Activated naive CD4-positive, alpha-beta T cell treated with anti-CD3 and anti-CD28 coated beads, Interleukin-2, amount 10 ng/mL, durations not matched to agents 7 days and 5 days (primary cell): ENCODE measurements at regions of chr10 and their contacts with region 1.

Region 1: GRCh38 chr10:22677333-22677732 is 37.0 kb downstream of the PIP4K2A start:
- DNase-seq: no peak
- H3K4me3 Mint-ChIP-seq: no peak overlapping the region
- H3K27ac Mint-ChIP-seq: peak overlapping the region; percentile 39
- H3K4me1 Mint-ChIP-seq: peaks cover 88% of the 10 kb centered on the region
- H3K27me3 Mint-ChIP-seq: no peaks in the 10 kb centered on the region

Region 2: DNA sequence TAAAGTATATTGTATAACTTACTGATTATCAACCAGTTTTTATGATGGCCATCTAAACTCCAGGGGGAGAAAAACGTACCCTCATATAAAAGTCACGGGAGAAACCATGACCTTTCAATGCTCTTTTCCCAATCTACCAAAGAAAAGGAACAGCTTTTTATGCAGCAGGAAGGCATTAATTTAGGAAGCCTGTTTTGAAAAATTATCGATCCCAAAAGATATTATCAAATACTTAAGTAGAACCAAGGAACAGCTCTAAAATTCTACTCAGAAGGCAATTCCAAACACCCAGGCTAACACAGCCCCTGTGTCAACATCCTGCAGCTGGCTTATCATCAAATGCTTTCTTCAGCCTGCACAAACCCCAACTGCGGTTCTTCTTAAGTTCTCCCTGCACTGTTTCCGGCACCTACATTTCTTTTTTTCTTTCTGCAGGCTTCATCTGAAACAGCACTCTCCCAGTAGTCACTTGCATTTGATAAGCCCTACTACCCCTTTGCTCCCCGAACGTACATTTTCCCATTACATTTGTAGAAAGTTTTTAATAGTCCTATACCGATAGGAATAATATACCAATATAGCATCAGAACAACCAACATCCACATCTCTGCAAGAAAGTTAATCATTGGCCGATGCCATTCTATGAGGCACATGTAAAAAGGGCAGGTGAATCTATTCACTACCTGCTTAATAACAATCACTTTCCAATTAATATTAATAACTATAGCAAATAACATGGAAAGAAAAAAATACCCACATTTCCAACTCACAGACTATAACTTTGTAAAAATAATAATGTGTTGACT is 10.8 kb before region 1 on chr10:
- CTCF ChIA-PET with region 1: interaction called, 10 read pairs
- DNase-seq: peak; percentile 76
- H3K4me3 Mint-ChIP-seq: peak overlapping the region; percentile 74
- H3K27ac Mint-ChIP-seq: peak overlapping the region; percentile 93
- H3K4me1 Mint-ChIP-seq: peaks cover 84% of the 10 kb centered on the region
- H3K27me3 Mint-ChIP-seq: no peaks in the 10 kb centered on the region